Sciatic nerve (tissue), 2 donors: ENCODE measurements at regions of chr9 and their contacts with region 1.

Region 1: GRCh38 chr9:292914-293313 is 78.2 kb downstream of the DOCK8 start:
- DNase-seq: no peak
- ATAC-seq: no peak

Region 2: GRCh38 chr9:354453-354852 is 61.5 kb after region 1 on chr9:
- intact Hi-C with region 1: no loop called
- DNase-seq: no peak
- ATAC-seq: no peak

Region 3: DNA sequence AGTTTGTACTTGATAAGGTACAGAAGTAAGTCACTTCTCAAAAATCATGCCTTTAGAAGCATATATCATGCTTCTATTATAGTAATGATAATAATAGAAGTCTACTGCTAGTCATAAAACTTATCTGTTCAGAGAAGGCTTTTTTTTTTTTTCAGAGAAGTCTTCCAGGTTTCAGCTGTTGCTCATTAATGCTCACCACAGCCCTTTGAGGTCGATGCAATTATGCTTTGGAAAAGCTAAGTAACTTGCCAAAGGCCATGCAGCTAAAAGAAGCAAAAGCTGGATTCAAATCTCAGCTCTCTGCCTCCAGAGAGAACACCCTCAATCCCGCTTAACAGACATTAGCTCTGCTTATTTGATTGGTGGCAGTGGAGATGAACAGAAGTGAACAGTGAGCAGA is 72.5 kb after region 1 on chr9:
- intact Hi-C with region 1: no loop called
- DNase-seq: no peak
- ATAC-seq: peak; percentile 42

Region 4: DNA sequence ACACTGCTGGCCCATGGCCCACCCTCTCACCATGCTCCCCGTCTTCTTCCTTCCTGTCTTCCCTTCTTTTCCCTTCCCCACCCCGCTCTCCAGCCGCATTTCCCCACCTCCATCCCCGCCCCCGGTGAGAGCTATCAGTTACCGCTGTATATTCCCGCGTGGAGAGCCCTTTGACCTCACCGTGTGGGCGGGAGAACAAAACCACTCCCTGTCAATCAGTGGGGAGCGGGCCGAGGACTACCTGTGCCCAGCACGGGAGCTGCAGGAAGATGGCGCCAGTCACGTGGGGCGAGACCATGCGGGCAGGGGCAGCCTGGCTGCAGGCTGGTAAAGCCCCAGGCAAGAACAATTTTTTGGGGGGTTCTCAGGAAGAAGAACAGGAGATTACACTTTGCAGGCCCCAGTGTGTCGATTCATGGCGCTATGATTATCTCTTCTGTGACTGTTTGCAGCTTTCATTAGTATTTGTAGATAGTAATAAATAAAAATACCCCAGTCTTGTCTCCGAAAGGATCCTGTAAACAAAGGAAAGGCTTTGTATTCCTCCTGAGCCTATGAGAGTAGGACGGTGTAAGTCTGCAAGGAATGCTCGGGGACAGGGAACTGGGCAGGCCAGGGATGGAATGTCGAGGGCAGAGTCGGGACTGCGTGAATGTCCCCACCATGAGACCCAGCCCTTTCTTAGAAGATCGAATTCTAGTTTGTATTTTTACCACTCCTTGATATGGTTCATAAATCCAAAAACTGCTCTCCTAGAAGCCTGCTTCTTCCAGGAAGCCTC is 533.8 kb after region 1 on chr9:
- intact Hi-C with region 1: no loop called
- DNase-seq: no peak
- ATAC-seq: no peak

Region 5: DNA sequence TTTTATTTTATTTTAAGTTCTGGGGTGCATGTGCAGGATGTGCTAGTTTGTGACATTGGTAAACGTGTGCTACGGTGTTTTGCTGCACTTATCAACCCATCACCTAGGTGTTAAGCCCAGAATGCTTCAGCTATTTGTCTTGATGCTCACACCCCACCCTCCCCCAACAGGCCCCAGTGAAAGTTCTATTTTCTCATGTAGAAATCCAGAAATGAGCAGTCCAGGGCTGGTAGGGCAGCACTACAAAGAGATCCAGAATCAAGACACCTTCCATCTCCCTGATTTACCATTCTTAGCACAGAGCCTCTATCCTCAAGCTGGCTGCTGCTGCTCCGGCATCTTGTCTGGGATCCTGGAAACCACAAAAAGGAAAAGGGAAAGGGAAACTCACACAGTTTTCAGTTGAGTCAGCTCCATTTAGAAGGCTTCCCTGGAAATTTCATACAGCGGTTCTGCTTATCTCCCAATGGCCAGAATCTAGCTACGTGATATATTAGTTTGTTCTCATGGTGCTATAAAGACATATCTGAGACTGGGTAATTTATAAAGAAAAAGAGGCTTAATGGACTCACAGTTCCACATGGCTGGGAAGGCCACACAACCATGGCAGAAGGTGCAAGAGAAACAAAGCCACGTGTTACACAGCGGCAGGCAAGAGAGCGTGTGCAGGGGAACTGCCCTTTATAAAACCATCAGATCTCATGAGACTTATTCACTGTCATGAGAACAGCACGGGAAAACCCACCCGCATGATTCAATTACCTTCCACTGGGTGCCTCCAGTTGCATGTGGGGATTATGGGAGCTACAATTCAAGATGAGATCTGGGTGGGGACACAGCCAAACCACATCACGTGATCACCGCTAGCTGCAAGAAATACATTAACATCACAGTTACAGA is 1637.1 kb after region 1 on chr9:
- intact Hi-C with region 1: loop called (anchors 5 kb)
- DNase-seq: no peak
- ATAC-seq: no peak